ENCODE measurements at regions of chr14 and their contacts with region 1.

Region 1: GRCh38 chr14:73105050-73105449 is 31.3 kb upstream of the PSEN1 start:
- DNase-seq: no peak
- H3K4me3 ChIP-seq: no peak overlapping the region
- H3K4me3 Mint-ChIP-seq: no peak overlapping the region
- H3K27ac ChIP-seq: no peak overlapping the region
- H3K27ac Mint-ChIP-seq: peak overlapping the region in 1 of 8 donors; percentile 64
- H3K4me1 ChIP-seq: no peaks in the 10 kb centered on the region
- H3K4me1 Mint-ChIP-seq: peaks cover 0 to 12% (median 0%) of the 10 kb centered on the region in 3 donors
- H3K27me3 ChIP-seq: no peaks in the 10 kb centered on the region
- H3K27me3 Mint-ChIP-seq: no peaks in the 10 kb centered on the region

Region 2: GRCh38 chr14:72986214-72986613 is 118.8 kb before region 1 on chr14:
- CTCF ChIA-PET with region 1: no interaction called
- POLR2A ChIA-PET with region 1: no interaction called
- DNase-seq: no peak
- H3K4me3 ChIP-seq: no peak overlapping the region
- H3K4me3 Mint-ChIP-seq: no peak overlapping the region
- H3K27ac ChIP-seq: no peak overlapping the region
- H3K27ac Mint-ChIP-seq: peak overlapping the region in 1 of 8 donors; percentile 32
- H3K4me1 ChIP-seq: no peaks in the 10 kb centered on the region
- H3K4me1 Mint-ChIP-seq: peaks cover 2 to 5% (median 3%) of the 10 kb centered on the region in 3 donors
- H3K27me3 ChIP-seq: no peaks in the 10 kb centered on the region
- H3K27me3 Mint-ChIP-seq: peaks cover 0 to 2% of the 10 kb centered on the region in 2 donors

Region 3: GRCh38 chr14:73153272-73153671 is 48.2 kb after region 1 on chr14:
- CTCF ChIA-PET with region 1: no interaction called
- POLR2A ChIA-PET with region 1: interaction called, 11 read pairs
- DNase-seq: no peak
- H3K4me3 ChIP-seq: no peak overlapping the region
- H3K4me3 Mint-ChIP-seq: no peak overlapping the region
- H3K27ac ChIP-seq: no peak overlapping the region
- H3K27ac Mint-ChIP-seq: peak overlapping the region in 1 of 8 donors; percentile 8
- H3K4me1 ChIP-seq: no peaks in the 10 kb centered on the region
- H3K4me1 Mint-ChIP-seq: no peaks in the 10 kb centered on the region
- H3K27me3 ChIP-seq: no peaks in the 10 kb centered on the region
- H3K27me3 Mint-ChIP-seq: peaks cover 0 to 1% of the 10 kb centered on the region in 2 donors

Measured in CD8-positive, alpha-beta memory T cell (primary cell).